K562 (cell line): ENCODE measurements at regions of chr6 and their contacts with region 1.

Region 1: GRCh38 chr6:32984605-32985389 is 16.4 kb downstream of the BRD2 start:
- DNase-seq: peak; percentile 80 to 93 (median 80)
- ATAC-seq: peak; percentile 75
- H3K4me3 ChIP-seq: no peak overlapping the region
- H3K27ac ChIP-seq: no peak overlapping the region
- H3K4me1 ChIP-seq: peaks cover 0 to 6% of the 10 kb centered on the region in 2 experiments; a peak in 2 of 5 replicates
- H3K27me3 ChIP-seq: peaks cover 8 to 15% of the 10 kb centered on the region in 2 experiments; a peak in 3 of 5 replicates
- CTCF ChIP-seq: peak; percentile 95 to 99 (median 97)
- EP300 ChIP-seq: no peak
- POLR2A ChIP-seq: no peak
- RAD21 ChIP-seq: peak; percentile 97 to 99

Region 2: GRCh38 chr6:32933636-32934085 is 51.1 kb before region 1 on chr6:
- CTCF ChIA-PET with region 1: interaction called, 57 read pairs
- POLR2A ChIA-PET with region 1: interaction called, 49 read pairs
- in situ Hi-C with region 1: loop called (anchors 10 kb)
- intact Hi-C with region 1: loop called (anchors 1 kb)
- DNase-seq: peak; percentile 78 to 85 (median 82)
- ATAC-seq: peak; percentile 92
- H3K4me3 ChIP-seq: no peak overlapping the region
- H3K27ac ChIP-seq: no peak overlapping the region
- H3K4me1 ChIP-seq: no peaks in the 10 kb centered on the region
- H3K27me3 ChIP-seq: peaks cover 17 to 34% of the 10 kb centered on the region in 2 experiments
- CTCF ChIP-seq: peak; percentile 85 to 94 (median 91)
- EP300 ChIP-seq: no peak
- POLR2A ChIP-seq: no peak
- RAD21 ChIP-seq: peak; percentile 86 to 91

Region 3: DNA sequence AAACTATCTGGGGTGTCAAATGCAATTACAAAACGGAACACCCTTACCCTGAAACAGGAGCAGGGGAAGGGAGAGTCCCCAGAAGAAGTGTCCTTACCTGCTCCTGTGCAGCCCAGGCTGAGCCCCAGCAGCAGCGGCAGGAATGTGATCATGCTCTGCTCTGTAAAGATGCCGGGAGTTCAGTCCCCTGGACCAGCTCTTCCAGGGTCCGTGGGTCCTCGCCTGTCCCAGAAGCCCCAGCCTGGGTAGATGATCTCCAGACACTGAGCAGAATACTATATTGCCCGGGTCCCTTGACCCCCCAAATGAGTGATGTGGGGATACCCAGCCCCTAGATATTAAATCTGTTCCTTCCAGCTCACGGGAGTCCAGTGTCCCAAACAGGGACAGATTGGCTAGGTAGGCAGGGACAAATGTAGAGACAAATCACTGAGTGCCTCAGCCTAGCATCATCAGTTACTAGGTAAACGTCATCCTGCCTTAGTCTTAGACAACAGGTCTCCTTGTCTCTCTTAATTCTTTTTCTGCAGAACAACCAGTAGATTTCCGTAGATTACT is 44.1 kb before region 1 on chr6 and contains the start of gene HLA-DMB:
- CTCF ChIA-PET with region 1: interaction called, 57 read pairs
- POLR2A ChIA-PET with region 1: interaction called, 11 read pairs
- in situ Hi-C with region 1: loop called (anchors 10 kb)
- intact Hi-C with region 1: no loop called
- DNase-seq: peak in 2 of 4 experiments; percentile 33 to 58
- ATAC-seq: peak; percentile 90
- H3K4me3 ChIP-seq: no peak within 1 kb of the TSS
- H3K27ac ChIP-seq: no peak within 1 kb of the TSS
- H3K4me1 ChIP-seq: no peaks in the 10 kb centered on the region
- H3K27me3 ChIP-seq: peaks cover 27 to 41% of the 10 kb centered on the region in 2 experiments
- CTCF ChIP-seq: no peak
- EP300 ChIP-seq: no peak
- POLR2A ChIP-seq: no peak
- RAD21 ChIP-seq: no peak
- polyA plus RNA-seq, gene HLA-DMB: not detected

Region 4: DNA sequence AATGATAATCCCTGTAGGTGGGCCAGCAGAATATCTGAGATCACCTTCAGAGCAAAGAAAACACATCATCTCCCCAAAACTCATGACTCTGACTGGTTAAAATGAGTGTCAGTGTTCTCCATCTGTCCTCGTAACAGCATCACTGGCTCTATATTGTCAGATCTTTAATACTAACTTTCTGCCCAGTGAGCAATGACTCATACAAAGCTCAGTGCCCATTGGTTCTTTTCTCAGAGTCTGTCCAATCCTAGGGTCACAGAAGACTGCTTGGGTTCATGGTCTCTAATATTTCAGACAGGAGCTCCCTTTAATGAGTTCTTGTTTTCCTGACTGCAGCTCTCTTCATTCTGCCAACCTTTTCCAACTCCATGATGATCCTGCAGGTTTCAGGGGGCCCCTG is 127.4 kb after region 1 on chr6:
- CTCF ChIA-PET with region 1: no interaction called
- POLR2A ChIA-PET with region 1: no interaction called
- in situ Hi-C with region 1: no loop called
- intact Hi-C with region 1: no loop called
- DNase-seq: peak; percentile 15 to 59 (median 55)
- ATAC-seq: peak; percentile 97
- H3K4me3 ChIP-seq: no peak overlapping the region
- H3K27ac ChIP-seq: no peak overlapping the region
- H3K4me1 ChIP-seq: peaks cover 0 to 3% of the 10 kb centered on the region in 2 experiments; a peak in 1 of 5 replicates
- H3K27me3 ChIP-seq: peaks cover 11 to 40% of the 10 kb centered on the region in 2 experiments; a peak in 4 of 5 replicates
- CTCF ChIP-seq: no peak
- EP300 ChIP-seq: no peak
- POLR2A ChIP-seq: no peak
- RAD21 ChIP-seq: no peak